Ovary (tissue), 10 donors: ENCODE measurements at regions of chr4 and their contacts with region 1.

Region 1: DNA sequence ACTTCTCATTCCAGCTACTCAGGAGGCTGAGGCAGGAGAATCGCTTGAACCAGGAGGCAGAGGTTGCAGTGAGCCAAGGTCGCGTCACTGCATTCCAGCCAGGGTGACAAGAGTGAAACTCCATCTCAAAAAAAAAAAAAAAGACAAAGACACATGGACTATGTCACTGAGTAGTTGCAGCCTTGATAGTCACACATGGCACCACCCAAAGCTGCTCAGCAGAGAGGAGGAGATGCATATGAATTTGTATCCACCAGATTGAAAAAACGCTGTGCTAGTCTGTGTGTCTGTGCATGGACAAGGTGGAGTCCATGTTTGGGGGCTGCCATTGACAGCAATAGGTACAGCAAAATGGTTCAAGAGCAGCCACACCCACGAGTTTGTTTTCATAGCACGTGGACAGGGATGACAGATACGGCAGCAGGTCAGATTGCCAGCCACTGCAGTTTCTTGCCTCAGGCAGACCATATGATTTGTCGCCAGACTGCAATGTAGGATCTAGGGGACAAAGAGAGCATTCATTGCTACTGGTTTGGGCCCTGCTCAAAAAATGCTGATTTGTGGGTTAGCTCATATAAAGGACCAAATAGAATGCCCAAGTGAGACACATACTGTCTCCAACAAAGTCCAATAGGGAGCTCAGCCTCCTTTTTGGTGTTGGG is 89.9 kb downstream of the CEP135 start:
- DNase-seq: no peak
- H3K4me3 ChIP-seq: no peak overlapping the region
- H3K27ac ChIP-seq: no peak overlapping the region
- H3K4me1 ChIP-seq: no peaks in the 10 kb centered on the region
- H3K27me3 ChIP-seq: no peaks in the 10 kb centered on the region
- CTCF ChIP-seq: no peak
- EP300 ChIP-seq: no peak
- POLR2A ChIP-seq: no peak

Region 2: GRCh38 chr4:56055027-56055977 is 16.7 kb after region 1 on chr4:
- intact Hi-C with region 1: no loop called
- DNase-seq: no peak
- H3K4me3 ChIP-seq: no peak overlapping the region
- H3K27ac ChIP-seq: no peak overlapping the region
- H3K4me1 ChIP-seq: no peaks in the 10 kb centered on the region
- H3K27me3 ChIP-seq: no peaks in the 10 kb centered on the region
- CTCF ChIP-seq: no peak
- EP300 ChIP-seq: no peak
- POLR2A ChIP-seq: no peak

Region 3: DNA sequence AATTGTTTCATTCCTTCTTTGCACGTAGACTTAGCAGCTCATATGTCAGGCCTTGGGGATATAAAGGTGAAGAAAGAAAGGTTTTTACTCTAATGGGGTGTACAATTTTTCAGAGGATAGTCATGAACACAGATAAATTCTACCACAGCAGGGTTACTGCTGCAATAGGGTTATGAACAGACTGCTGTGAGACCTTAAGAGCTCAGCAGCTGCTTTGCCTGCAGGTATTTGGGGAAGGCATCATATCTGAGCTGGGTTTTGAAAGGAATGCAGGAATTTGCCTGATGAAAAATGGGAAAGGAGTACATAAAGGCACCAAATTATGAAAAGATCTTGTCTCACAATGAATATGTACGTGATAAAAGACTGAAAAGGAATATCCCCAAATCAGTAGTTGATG is 39.1 kb after region 1 on chr4:
- intact Hi-C with region 1: loop called in 1 of 4 experiments (anchors 2 kb)
- DNase-seq: no peak
- H3K4me3 ChIP-seq: no peak overlapping the region
- H3K27ac ChIP-seq: no peak overlapping the region
- H3K4me1 ChIP-seq: no peaks in the 10 kb centered on the region
- H3K27me3 ChIP-seq: no peaks in the 10 kb centered on the region
- CTCF ChIP-seq: no peak
- EP300 ChIP-seq: no peak
- POLR2A ChIP-seq: no peak